ENCODE measurements at regions of chr19 and their contacts with region 1.

Region 1: GRCh38 chr19:1269065-1269477 is at the start of gene CIRBP:
- DNase-seq: peak; percentile 97
- ATAC-seq: peak; percentile 69
- H3K4me3 ChIP-seq: peak within 1 kb of the TSS; percentile 85 to 96
- H3K27ac ChIP-seq: peak within 1 kb of the TSS; percentile 100
- H3K4me1 ChIP-seq: peaks cover 44 to 81% of the 10 kb centered on the region in 2 experiments
- H3K27me3 ChIP-seq: no peaks in the 10 kb centered on the region
- CTCF ChIP-seq: no peak
- POLR2A ChIP-seq: peak; percentile 97
- RAD21 ChIP-seq: no peak
- total RNA-seq, gene CIRBP: 276 TPM

Region 2: DNA sequence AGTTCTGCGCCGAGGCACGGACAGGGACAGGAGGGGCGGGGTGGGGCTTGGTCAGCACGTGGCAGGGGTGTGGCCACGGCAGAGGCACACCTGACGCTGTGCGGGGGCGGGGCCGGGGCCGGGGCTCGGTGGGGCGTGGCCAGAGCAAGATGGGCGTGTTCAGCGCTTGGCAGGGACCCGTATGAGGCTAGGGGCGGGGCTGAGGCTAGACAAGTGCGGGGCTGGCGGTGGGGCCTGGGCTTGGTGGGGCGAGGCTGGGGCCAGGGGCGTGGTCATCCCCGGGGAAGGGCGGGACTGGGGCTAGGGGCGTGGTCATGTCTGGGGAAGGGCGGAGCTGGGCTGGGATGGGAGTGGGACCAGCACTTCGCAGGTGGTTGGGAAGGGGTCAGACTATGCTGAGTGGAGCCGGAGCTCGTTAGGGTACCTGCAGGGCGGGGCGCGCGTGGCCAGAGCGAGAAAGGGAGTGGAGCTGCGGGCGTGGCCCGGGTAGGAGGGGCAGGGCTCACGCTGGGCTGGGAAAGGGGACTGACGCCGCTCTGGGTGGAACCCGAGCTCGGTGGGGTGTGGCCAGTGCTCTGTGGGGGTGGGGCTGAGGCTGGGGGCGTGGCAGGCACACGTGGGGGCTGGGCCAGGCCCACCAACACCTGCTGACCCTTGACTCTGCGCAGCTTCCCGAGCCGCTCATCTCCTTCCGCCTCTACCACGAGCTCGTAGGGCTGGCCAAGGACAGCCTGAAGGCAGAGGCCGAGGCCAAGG is 186.7 kb before region 1 on chr19:
- CTCF ChIA-PET with region 1: no interaction called
- POLR2A ChIA-PET with region 1: interaction called, 11 read pairs
- RAD21 ChIA-PET with region 1: no interaction called
- intact Hi-C with region 1: no loop called
- DNase-seq: peak; percentile 89
- ATAC-seq: peak; percentile 88
- H3K4me3 ChIP-seq: peak overlapping the region in 1 of 2 experiments; percentile 30; a peak in 1 of 4 replicates
- H3K27ac ChIP-seq: peak overlapping the region; percentile 83
- H3K4me1 ChIP-seq: peaks cover 4 to 18% of the 10 kb centered on the region in 2 experiments
- H3K27me3 ChIP-seq: no peaks in the 10 kb centered on the region
- CTCF ChIP-seq: no peak
- POLR2A ChIP-seq: no peak
- RAD21 ChIP-seq: no peak

Region 3: DNA sequence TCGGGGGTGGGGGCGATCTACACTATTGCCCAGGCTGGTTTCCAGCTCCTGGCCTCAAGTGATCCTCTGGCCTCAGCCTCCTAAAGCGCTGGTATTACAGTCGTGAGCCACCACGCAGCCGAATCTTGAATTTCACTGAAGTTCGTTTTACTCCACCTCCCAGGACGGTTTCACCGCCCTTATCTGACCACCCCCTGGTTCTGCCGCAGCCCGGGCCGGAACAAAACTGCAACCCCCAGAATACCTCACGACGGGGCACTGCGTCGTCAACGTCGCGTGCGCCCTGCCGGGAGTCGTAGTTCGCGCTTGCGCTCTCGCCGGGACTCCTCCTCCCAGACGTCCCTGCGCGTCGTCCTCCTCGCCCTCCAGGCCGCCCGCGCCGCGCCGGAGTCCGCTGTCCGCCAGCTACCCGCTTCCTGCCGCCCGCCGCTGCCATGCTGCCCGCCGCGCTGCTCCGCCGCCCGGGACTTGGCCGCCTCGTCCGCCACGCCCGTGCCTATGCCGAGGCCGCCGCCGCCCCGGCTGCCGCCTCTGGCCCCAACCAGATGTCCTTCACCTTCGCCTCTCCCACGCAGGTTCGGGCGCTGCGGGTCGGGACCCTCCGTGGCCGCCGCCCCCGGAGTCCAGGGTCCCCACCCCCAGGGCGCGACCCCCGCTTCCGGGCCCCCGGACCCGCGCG is 27.5 kb before region 1 on chr19 and contains the start of gene ATP5F1D:
- CTCF ChIA-PET with region 1: interaction called, 325 read pairs
- POLR2A ChIA-PET with region 1: interaction called, 139 read pairs
- RAD21 ChIA-PET with region 1: interaction called, 45 to 51 read pairs
- intact Hi-C with region 1: loop called (anchors 1 kb)
- DNase-seq: no peak
- ATAC-seq: peak; percentile 60
- H3K4me3 ChIP-seq: peak within 1 kb of the TSS; percentile 87 to 89
- H3K27ac ChIP-seq: peak within 1 kb of the TSS; percentile 100
- H3K4me1 ChIP-seq: peaks cover 52 to 70% of the 10 kb centered on the region in 2 experiments
- H3K27me3 ChIP-seq: no peaks in the 10 kb centered on the region
- CTCF ChIP-seq: no peak
- POLR2A ChIP-seq: peak; percentile 61
- RAD21 ChIP-seq: no peak
- total RNA-seq, gene ATP5F1D: 428 TPM

Region 4: DNA sequence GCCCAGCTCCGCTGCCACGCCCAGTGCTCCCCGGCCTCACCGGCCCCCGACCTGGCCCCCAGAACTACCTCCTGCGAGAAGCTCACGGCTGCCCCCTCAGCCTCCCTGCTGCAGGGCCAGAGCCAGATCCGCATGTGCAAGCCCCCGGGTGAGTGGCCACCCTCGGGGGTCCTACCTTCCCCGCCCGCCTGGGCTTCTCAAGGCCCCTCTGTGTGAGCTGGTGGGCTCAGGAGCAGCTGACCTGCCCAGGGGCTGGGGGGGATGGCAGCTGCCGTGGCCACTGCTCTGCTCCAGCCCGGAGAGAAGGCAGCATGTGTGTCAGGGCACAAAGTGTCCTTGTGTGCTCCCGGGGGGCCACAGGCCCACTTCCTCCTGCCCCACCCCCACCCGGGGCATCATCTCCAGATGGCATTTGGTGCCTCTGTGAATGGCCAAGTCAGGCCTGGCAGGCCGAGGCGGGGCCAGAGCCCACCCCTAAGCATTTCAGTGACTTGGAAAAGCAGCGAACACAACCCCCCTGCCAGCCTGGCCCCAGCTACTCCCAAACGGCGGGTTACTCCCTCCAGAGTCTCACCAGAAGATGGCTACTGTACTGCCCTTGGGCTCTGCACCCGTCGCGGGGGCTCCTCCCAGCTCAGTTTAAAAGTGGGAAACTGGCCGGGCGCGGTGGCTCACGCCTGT is 13.4 kb before region 1 on chr19:
- CTCF ChIA-PET with region 1: interaction called, 16 read pairs
- POLR2A ChIA-PET with region 1: interaction called, 54 read pairs
- RAD21 ChIA-PET with region 1: interaction called, 7 to 12 read pairs
- intact Hi-C with region 1: no loop called
- DNase-seq: no peak
- ATAC-seq: no peak
- H3K4me3 ChIP-seq: no peak overlapping the region
- H3K27ac ChIP-seq: peak overlapping the region; percentile 99
- H3K4me1 ChIP-seq: peaks cover 42 to 96% of the 10 kb centered on the region in 2 experiments
- H3K27me3 ChIP-seq: no peaks in the 10 kb centered on the region
- CTCF ChIP-seq: no peak
- POLR2A ChIP-seq: no peak
- RAD21 ChIP-seq: no peak

Region 5: GRCh38 chr19:1455336-1456120 is 186.5 kb after region 1 on chr19:
- CTCF ChIA-PET with region 1: interaction called, 4 read pairs
- POLR2A ChIA-PET with region 1: interaction called, 16 read pairs
- RAD21 ChIA-PET with region 1: no interaction called
- intact Hi-C with region 1: no loop called
- DNase-seq: peak; percentile 97
- ATAC-seq: peak; percentile 87
- H3K4me3 ChIP-seq: peak overlapping the region; percentile 40 to 62
- H3K27ac ChIP-seq: peak overlapping the region; percentile 65
- H3K4me1 ChIP-seq: peaks cover 23 to 47% of the 10 kb centered on the region in 2 experiments
- H3K27me3 ChIP-seq: no peaks in the 10 kb centered on the region; the same call in 1 of the 2 replicates
- CTCF ChIP-seq: no peak
- POLR2A ChIP-seq: peak; percentile 22
- RAD21 ChIP-seq: no peak

Measured in HCT116 (cell line).